Tibial artery (tissue), 4 donors: ENCODE measurements at regions of chr9 and their contacts with region 1.

Region 1: DNA sequence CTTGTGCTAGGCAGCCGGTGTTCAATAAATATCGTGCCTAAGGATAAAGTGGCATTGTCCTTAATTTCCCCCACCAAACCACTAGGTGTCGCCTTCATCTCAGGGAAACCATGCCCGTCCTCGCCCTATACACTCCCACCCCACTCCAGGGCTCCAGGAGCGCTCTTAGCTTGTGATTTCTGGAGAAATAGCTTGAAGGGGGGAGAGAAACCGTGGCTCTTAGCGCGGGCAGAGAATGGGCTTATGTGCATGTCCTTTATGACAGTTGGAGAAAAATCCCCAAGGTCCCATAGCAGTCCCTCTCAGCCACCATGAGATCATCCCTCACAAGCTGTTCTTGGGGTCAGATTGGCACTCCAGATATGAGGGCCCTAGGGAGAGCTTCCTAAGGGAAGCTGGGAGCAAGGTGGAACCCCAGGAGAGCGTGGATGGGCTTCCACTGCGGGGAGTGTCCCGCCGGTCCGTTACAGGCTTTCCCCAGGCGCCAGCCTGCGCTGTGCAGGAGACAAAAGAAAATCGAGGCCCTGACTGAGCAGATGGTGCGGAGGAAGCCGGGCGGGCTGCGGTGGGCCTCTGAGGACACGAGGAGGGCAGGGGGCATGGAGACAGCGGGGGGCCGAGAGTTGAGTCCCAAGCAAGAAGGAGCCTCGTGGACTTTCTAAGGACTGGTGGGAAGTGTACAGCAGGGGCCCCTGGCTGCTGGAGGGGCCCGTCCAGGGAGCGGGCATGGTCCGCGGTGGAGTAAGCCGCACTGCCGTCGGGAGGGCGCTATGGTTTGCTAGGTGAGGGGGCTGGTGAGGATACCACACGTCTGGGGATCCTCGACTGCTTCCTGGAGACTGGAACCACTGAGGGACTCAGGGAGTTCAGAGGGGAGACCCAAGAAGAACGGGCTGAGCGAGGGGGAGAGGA is 750 bp upstream of the NPR2 start:
- DNase-seq: peak; percentile 82 to 89
- H3K4me3 ChIP-seq: peak overlapping the region; percentile 60 to 61
- H3K27ac ChIP-seq: peak overlapping the region; percentile 82 to 87
- H3K4me1 ChIP-seq: peaks cover 0 to 46% (median 36%) of the 10 kb centered on the region in 4 donors
- H3K27me3 ChIP-seq: no peaks in the 10 kb centered on the region
- CTCF ChIP-seq: peak; percentile 82 to 93

Region 2: DNA sequence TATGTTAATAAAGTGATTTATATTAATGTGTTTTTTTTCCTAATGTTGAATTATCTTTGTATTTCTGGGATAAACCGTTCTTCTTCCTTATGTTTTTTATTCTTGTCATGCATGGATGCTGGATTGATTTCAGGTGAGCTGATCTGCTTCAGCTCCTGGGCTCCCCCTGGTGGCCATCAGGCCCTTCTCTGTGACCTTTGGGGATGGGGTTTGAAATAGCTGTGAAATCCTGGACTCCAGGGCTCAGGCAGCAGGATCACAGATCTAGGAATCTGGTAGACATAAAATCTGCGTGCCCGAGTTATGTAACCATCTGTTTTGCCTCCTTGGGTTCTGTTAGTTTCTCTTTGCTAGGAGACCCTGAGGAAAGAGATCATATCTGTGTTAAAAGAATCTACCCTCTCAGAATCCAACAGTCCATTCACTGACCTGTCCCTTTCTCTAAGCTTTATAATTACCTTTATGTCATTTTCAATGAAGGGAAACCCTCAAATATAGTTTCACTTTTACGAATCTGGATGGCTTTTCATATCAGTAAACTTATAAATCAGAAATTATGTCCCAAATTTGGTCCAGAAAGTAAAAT is 91.7 kb after region 1 on chr9:
- intact Hi-C with region 1: loop called (anchors 5 kb)
- DNase-seq: peak; percentile 87 to 89
- H3K4me3 ChIP-seq: no peak overlapping the region
- H3K27ac ChIP-seq: no peak overlapping the region
- H3K4me1 ChIP-seq: no peaks in the 10 kb centered on the region
- H3K27me3 ChIP-seq: no peaks in the 10 kb centered on the region
- CTCF ChIP-seq: peak; percentile 90 to 92